Activated CD4-positive, alpha-beta memory T cell treated with anti-CD3 and anti-CD28 coated beads, Interleukin-2, amount 10 ng/mL, durations not matched to agents 7 days and 5 days (primary cell): ENCODE measurements at regions of chr20 and their contacts with region 1.

Region 1: DNA sequence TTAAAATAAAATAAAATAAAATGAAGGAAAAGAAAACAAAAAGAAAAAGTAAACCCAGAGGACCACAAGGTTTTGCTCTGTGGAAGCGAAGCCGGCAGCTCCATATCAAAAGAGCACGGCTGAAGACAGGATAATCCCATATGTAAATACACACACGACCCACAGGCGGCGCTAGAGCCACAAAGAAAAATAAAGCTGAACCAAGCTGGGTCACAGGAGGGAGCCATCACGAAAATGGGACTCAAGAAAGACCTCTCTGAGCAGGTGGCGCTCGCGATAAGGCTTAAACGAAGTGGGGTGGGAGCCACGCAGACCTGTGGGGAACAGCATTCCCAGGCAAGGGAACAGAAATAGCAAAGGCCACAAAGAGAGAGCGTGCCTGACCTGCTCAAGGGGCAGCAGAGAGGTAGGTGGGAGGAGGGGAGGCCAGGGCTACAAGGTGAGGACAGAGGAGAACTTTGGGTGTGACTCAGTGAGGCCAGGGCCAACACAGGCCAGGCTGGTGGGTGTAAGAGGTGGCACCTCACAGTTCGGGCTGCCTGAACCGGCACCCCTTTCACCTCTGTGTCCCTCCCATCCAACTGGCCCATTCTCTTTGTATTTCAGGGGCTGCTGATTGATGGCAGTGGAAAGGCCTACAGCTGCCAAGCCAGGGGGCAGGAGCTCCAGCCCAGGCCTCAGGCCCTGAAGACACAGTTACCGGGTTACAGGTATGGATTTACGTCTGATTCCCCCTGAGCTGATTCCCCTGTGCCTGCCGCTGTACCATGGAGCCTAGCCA is 26.0 kb downstream of the PTGIS start:
- DNase-seq: peak; percentile 84
- H3K4me3 Mint-ChIP-seq: no peak overlapping the region
- H3K27ac Mint-ChIP-seq: peak overlapping the region; percentile 80
- H3K4me1 Mint-ChIP-seq: peaks cover 33% of the 10 kb centered on the region
- H3K27me3 Mint-ChIP-seq: peaks cover 2% of the 10 kb centered on the region

Region 2: DNA sequence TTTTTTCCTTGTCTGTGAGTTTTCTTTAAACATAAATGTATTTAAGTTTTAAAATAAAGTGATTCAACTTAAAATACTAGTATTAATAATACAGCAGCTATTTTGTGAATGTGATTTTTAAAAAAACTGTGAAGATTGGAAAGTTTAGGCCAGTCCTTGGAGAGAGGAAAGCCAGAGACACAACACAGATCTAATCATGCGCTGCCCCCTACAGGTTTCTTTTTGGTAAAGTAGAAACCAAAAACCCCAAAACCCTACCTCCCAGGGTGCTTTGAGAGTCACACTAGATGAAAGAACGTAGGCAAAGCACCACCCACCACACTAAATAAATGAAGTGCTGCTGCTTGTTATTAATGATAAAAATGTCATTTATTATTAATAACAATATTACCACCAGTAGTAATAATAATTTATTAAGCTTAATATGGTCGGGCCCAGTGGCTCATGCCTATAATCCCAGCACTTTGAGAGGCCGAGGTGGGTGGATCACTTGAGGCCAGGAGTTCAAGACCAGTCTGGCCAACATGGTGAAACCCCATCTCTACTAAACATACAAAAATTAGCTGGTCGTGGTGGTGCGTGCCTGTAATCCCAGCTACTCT is 304.4 kb after region 1 on chr20:
- CTCF ChIA-PET with region 1: interaction called, 36 read pairs
- POLR2A ChIA-PET with region 1: interaction called, 4 read pairs
- DNase-seq: peak; percentile 50
- H3K4me3 Mint-ChIP-seq: no peak overlapping the region
- H3K27ac Mint-ChIP-seq: no peak overlapping the region
- H3K4me1 Mint-ChIP-seq: peaks cover 18% of the 10 kb centered on the region
- H3K27me3 Mint-ChIP-seq: no peaks in the 10 kb centered on the region

Region 3: DNA sequence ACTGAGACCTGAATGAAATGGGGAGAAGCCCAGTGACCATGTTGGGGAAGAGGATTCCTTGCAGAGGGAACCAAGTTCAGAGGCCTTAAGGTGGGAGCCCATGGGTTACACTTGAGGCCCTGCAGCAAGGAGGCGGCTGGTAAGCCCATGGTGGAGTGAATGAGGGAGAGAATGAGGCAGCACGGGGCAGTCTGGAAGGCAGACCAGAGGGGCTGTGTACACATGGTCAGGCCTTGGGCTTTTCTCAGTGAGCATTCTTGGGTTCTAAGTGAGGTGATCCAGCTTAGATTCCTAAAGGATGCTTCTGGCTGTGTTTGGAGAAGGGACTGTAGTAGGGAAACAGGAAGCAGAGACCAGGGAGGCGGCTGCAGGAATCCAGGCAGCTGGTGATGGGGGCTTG is 413.2 kb after region 1 on chr20:
- CTCF ChIA-PET with region 1: no interaction called
- POLR2A ChIA-PET with region 1: no interaction called
- DNase-seq: no peak
- H3K4me3 Mint-ChIP-seq: no peak overlapping the region
- H3K27ac Mint-ChIP-seq: no peak overlapping the region
- H3K4me1 Mint-ChIP-seq: peaks cover 3% of the 10 kb centered on the region
- H3K27me3 Mint-ChIP-seq: no peaks in the 10 kb centered on the region